CD4-positive, alpha-beta memory T cell (primary cell): ENCODE measurements at regions of chr2 and their contacts with region 1.

Region 1: GRCh38 chr2:174487108-174487819 is 435 bp upstream of the GPR155 start:
- DNase-seq: peak; percentile 77 to 94 (median 82)
- H3K4me3 ChIP-seq: peak overlapping the region; percentile 4 to 77
- H3K4me3 Mint-ChIP-seq: peak overlapping the region; percentile 91 to 100 (median 98)
- H3K27ac ChIP-seq: peak overlapping the region; percentile 81
- H3K27ac Mint-ChIP-seq: peak overlapping the region; percentile 91 to 97 (median 94)
- H3K4me1 ChIP-seq: peaks cover 76% of the 10 kb centered on the region
- H3K4me1 Mint-ChIP-seq: peaks cover 48 to 87% (median 64%) of the 10 kb centered on the region in 4 donors
- H3K27me3 ChIP-seq: no peaks in the 10 kb centered on the region
- H3K27me3 Mint-ChIP-seq: no peaks in the 10 kb centered on the region

Region 2: DNA sequence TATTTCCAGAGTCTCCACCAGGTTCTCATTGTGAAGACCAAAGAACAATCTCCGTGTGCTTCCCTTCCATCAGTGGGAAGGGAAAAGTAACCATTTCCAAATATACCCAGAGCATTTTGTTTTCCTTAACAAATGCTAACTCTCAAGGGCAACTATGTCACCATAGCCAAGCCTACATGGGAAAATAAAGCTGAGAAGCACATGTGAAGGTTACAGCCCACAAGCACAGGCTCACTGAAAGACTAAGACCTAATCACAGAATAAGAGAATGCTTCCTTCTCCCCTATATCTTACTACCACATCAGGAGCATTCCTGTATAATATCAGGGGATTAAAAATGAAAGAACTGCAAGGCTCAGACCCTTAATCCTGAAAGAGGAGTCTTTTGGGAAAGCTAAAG is 124.3 kb before region 1 on chr2:
- CTCF ChIA-PET with region 1: no interaction called
- POLR2A ChIA-PET with region 1: no interaction called
- intact Hi-C with region 1: no loop called
- DNase-seq: no peak
- H3K4me3 ChIP-seq: no peak overlapping the region
- H3K4me3 Mint-ChIP-seq: no peak overlapping the region
- H3K27ac ChIP-seq: no peak overlapping the region
- H3K27ac Mint-ChIP-seq: no peak overlapping the region
- H3K4me1 ChIP-seq: no peaks in the 10 kb centered on the region
- H3K4me1 Mint-ChIP-seq: peaks cover 0 to 7% (median 2%) of the 10 kb centered on the region in 4 donors
- H3K27me3 ChIP-seq: no peaks in the 10 kb centered on the region
- H3K27me3 Mint-ChIP-seq: no peaks in the 10 kb centered on the region

Region 3: GRCh38 chr2:174395284-174395968 is 91.8 kb before region 1 on chr2 and contains the start of gene SCRN3:
- CTCF ChIA-PET with region 1: no interaction called
- POLR2A ChIA-PET with region 1: no interaction called
- intact Hi-C with region 1: loop called (anchors 1 kb)
- DNase-seq: peak; percentile 77 to 90 (median 83)
- H3K4me3 ChIP-seq: peak within 1 kb of the TSS; percentile 92 to 96
- H3K4me3 Mint-ChIP-seq: peak within 1 kb of the TSS; percentile 96 to 99 (median 98)
- H3K27ac ChIP-seq: peak within 1 kb of the TSS; percentile 97
- H3K27ac Mint-ChIP-seq: peak within 1 kb of the TSS; percentile 99 to 100 (median 99)
- H3K4me1 ChIP-seq: peaks cover 39% of the 10 kb centered on the region
- H3K4me1 Mint-ChIP-seq: peaks cover 32 to 64% (median 43%) of the 10 kb centered on the region in 4 donors
- H3K27me3 ChIP-seq: no peaks in the 10 kb centered on the region
- H3K27me3 Mint-ChIP-seq: no peaks in the 10 kb centered on the region
- total RNA-seq, gene SCRN3: 14.7 to 15.2 TPM

Region 4: DNA sequence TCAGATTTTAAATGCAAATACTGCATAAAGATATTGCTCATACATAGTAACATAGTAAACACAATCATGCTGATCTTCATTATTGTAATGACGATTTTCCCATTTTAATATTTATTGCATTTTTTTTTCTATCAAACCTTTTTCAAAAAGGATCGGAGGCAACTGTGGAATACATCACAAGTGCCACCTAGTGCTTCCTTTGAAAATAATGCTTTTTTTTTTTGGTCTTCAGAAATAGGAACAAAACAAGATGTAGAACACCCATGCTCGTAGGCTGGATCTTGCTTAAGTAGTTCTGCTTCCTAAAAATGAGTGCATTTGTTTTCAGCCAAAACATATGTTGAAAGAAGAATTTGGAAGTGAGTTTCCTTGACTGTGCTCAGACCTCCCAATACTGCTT is 35.3 kb after region 1 on chr2:
- CTCF ChIA-PET with region 1: interaction called, 44 read pairs
- POLR2A ChIA-PET with region 1: interaction called, 6 read pairs
- intact Hi-C with region 1: loop called (anchors 2 kb)
- DNase-seq: peak in 2 of 5 donors; percentile 7 to 13
- H3K4me3 ChIP-seq: no peak overlapping the region
- H3K4me3 Mint-ChIP-seq: no peak overlapping the region
- H3K27ac ChIP-seq: no peak overlapping the region
- H3K27ac Mint-ChIP-seq: no peak overlapping the region
- H3K4me1 ChIP-seq: no peaks in the 10 kb centered on the region
- H3K4me1 Mint-ChIP-seq: peaks cover 5 to 9% (median 8%) of the 10 kb centered on the region in 4 donors
- H3K27me3 ChIP-seq: no peaks in the 10 kb centered on the region
- H3K27me3 Mint-ChIP-seq: peaks cover 0 to 2% of the 10 kb centered on the region in 2 donors

Region 5: GRCh38 chr2:174553811-174554493 is 66.7 kb after region 1 on chr2:
- CTCF ChIA-PET with region 1: interaction called, 5 read pairs
- POLR2A ChIA-PET with region 1: interaction called, 14 read pairs
- intact Hi-C with region 1: loop called (anchors 2 kb)
- DNase-seq: peak; percentile 33 to 58 (median 49)
- H3K4me3 ChIP-seq: no peak overlapping the region
- H3K4me3 Mint-ChIP-seq: peak overlapping the region; percentile 57 to 85 (median 74)
- H3K27ac ChIP-seq: peak overlapping the region; percentile 67
- H3K27ac Mint-ChIP-seq: peak overlapping the region; percentile 83 to 97 (median 89)
- H3K4me1 ChIP-seq: peaks cover 39% of the 10 kb centered on the region
- H3K4me1 Mint-ChIP-seq: peaks cover 31 to 52% (median 37%) of the 10 kb centered on the region in 4 donors
- H3K27me3 ChIP-seq: no peaks in the 10 kb centered on the region
- H3K27me3 Mint-ChIP-seq: no peaks in the 10 kb centered on the region

Region 6: DNA sequence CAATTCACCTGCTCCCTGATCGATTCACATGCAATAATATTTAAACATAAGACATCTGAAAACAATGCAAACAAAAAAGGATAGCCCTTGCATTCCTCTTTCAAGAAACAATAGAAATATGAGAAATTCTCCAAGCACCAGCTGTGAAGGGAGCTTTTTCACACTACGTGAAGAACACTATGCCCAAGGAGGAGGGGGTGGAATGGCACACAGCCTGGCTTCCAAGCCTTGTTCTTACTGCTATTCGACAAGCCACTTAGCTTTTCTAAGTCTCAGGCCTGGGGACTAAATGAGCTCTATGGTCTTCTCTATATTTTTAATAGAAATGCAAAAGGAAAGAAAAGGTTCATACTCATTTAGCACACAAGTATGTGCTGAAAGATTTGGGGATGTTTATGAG is 369.2 kb after region 1 on chr2:
- CTCF ChIA-PET with region 1: no interaction called
- POLR2A ChIA-PET with region 1: no interaction called
- intact Hi-C with region 1: no loop called
- DNase-seq: no peak
- H3K4me3 ChIP-seq: no peak overlapping the region
- H3K4me3 Mint-ChIP-seq: no peak overlapping the region
- H3K27ac ChIP-seq: no peak overlapping the region
- H3K27ac Mint-ChIP-seq: no peak overlapping the region
- H3K4me1 ChIP-seq: no peaks in the 10 kb centered on the region
- H3K4me1 Mint-ChIP-seq: no peaks in the 10 kb centered on the region
- H3K27me3 ChIP-seq: no peaks in the 10 kb centered on the region
- H3K27me3 Mint-ChIP-seq: no peaks in the 10 kb centered on the region